Activated naive CD8-positive, alpha-beta T cell treated with anti-CD3 and anti-CD28 coated beads, Interleukin-2, amount 10 ng/mL, durations not matched to agents 7 days and 5 days (primary cell): ENCODE measurements at regions of chr6 and their contacts with region 1.

Region 1: DNA sequence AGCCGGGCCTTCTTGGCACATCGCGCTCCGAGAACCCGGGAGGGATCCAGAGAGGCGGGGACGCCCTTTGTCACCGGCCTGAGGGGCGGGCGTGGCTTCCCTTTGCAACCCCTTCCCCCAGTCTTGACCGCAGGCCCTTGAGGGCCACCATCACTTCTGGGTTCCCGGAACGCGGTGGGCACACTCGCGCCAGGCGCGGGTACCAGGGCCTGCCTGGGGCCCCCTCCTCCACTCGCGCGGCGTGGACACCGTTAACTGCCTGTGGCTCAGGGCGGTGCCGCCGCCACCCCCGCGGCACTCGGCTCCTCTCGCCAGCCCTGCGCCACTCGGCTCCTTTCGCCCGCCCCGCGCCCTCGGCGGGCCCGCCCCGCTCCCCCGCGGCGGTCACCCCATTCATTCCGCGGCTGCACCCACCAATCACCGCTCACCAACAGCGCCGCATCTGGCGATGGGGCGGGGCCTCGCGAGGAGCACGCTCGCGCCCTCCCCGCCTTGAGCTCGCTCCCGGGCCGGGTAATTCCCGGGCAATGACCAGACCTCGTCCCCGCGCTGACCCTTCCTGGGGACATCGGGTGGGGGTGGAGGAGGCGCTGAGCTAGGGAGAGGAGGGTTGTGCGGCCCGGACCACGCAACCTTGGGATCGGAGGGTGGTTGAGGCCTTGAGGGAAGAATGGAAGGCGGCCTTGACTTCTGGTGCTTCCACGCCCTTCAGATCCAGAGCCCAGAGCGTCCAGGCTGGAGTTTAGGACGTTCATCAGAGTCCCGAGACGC is 10.5 kb upstream of the ELOVL5 start:
- DNase-seq: peak; percentile 95
- ATAC-seq: peak; percentile 96
- H3K4me3 Mint-ChIP-seq: peak overlapping the region; percentile 91
- H3K27ac Mint-ChIP-seq: peak overlapping the region; percentile 98
- H3K4me1 Mint-ChIP-seq: peaks cover 30% of the 10 kb centered on the region
- H3K27me3 Mint-ChIP-seq: peaks cover 3% of the 10 kb centered on the region

Region 2: GRCh38 chr6:53300656-53301551 is 58.4 kb before region 1 on chr6:
- POLR2A ChIA-PET with region 1: interaction called, 17 read pairs
- DNase-seq: no peak
- ATAC-seq: peak; percentile 16
- H3K4me3 Mint-ChIP-seq: peak overlapping the region; percentile 18
- H3K27ac Mint-ChIP-seq: peak overlapping the region; percentile 5
- H3K4me1 Mint-ChIP-seq: peaks cover 44% of the 10 kb centered on the region
- H3K27me3 Mint-ChIP-seq: no peaks in the 10 kb centered on the region

Region 3: DNA sequence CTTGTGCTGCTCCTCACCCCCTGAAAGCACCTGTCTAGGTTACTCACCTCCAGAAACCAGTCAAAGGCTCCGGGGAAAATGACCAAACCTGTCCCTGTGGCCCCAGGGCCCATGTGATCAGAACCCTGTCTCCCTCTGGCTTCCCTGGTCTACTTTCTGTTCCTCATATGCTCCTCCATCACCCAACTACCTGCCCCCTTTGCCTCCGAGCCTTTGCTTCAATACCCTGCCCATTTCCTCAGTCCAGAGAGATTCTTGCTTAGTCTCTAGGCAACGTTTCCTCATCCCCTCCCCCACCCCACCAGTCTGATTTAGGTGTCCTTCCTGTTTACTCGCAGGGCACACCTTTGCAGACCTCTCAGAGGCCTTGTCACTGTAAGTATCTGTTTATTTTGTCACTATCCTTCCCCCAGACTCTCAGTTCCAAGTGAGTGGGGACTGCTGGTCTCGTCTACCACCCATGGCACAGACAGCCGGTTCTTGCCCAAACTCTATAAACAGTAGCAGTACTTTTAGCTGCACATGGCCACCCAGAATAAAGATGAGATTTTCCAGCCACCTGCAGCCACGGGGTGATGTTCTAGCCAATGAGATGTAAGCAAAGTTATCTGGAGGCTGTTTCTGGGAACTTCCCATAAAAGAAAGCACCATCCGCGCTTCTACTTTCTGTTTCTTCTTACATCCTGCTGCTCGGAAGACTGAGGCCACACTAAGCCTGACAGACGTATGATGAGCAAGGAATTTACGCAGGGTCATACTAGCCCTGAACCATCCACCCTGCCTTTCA is 23.9 kb before region 1 on chr6:
- POLR2A ChIA-PET with region 1: interaction called, 15 read pairs
- DNase-seq: peak; percentile 62
- ATAC-seq: peak; percentile 80
- H3K4me3 Mint-ChIP-seq: peak overlapping the region; percentile 83
- H3K27ac Mint-ChIP-seq: peak overlapping the region; percentile 93
- H3K4me1 Mint-ChIP-seq: peaks cover 59% of the 10 kb centered on the region
- H3K27me3 Mint-ChIP-seq: no peaks in the 10 kb centered on the region